ENCODE measurements at regions of chr3 and their contacts with region 1.

Region 1: GRCh38 chr3:194769020-194769643 is 83.4 kb downstream of the FAM43A start:
- DNase-seq: peak; percentile 86
- H3K4me3 Mint-ChIP-seq: peak overlapping the region; percentile 76
- H3K27ac Mint-ChIP-seq: peak overlapping the region; percentile 67
- H3K4me1 Mint-ChIP-seq: peaks cover 21% of the 10 kb centered on the region
- H3K27me3 Mint-ChIP-seq: peaks cover 21% of the 10 kb centered on the region

Region 2: DNA sequence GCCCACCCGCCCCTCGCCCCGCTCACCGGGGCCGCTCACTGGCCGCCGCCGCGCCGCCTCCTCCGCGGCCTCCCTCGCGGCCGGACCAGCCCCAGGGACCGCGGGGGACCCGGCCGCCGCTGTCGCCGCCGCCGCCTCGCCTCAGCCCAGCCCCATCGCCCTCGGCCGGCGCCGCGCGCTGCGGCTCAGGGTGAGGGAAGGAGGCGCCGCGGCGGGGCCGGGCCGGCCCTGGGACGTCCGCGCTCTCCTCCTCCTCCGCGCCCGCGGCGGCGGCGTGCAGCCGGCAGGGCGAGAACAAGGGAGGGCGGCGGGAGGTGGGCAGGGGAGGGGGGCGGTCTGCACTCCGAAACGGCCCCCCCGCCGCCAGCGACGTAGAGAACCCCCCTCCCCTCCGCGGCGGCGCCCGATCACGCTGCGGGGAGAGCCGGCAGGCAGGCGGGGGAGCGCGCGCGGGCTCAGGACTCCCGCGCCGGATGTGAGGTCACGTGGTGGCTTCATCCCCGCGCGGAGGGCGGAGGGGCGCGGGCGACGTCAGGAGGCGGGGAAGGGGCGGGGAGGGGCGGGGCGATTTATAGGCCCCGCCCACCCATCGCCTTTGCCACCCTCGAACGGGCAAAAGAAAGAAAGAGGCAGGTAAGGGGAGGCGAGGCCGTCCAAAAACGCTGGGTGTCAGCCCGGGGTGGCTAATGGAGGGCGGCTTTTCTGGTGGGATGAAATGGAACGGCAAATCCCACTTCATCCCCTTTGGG is 282.4 kb before region 1 on chr3 and contains the start of gene ATP13A3:
- intact Hi-C with region 1: loop called (anchors 5 kb)
- DNase-seq: peak; percentile 87
- H3K4me3 Mint-ChIP-seq: peak within 1 kb of the TSS; percentile 96
- H3K27ac Mint-ChIP-seq: peak within 1 kb of the TSS; percentile 95
- H3K4me1 Mint-ChIP-seq: peaks cover 55% of the 10 kb centered on the region
- H3K27me3 Mint-ChIP-seq: peaks cover 1% of the 10 kb centered on the region
- total RNA-seq, gene ATP13A3: 198 and 206 TPM in 2 replicates

Region 3: GRCh38 chr3:194583604-194584318 is 185.4 kb before region 1 on chr3:
- intact Hi-C with region 1: loop called (anchors 5 kb)
- DNase-seq: peak; percentile 95
- H3K4me3 Mint-ChIP-seq: peak overlapping the region; percentile 98
- H3K27ac Mint-ChIP-seq: peak overlapping the region; percentile 96
- H3K4me1 Mint-ChIP-seq: peaks cover 34% of the 10 kb centered on the region
- H3K27me3 Mint-ChIP-seq: peaks cover 7% of the 10 kb centered on the region

Region 4: DNA sequence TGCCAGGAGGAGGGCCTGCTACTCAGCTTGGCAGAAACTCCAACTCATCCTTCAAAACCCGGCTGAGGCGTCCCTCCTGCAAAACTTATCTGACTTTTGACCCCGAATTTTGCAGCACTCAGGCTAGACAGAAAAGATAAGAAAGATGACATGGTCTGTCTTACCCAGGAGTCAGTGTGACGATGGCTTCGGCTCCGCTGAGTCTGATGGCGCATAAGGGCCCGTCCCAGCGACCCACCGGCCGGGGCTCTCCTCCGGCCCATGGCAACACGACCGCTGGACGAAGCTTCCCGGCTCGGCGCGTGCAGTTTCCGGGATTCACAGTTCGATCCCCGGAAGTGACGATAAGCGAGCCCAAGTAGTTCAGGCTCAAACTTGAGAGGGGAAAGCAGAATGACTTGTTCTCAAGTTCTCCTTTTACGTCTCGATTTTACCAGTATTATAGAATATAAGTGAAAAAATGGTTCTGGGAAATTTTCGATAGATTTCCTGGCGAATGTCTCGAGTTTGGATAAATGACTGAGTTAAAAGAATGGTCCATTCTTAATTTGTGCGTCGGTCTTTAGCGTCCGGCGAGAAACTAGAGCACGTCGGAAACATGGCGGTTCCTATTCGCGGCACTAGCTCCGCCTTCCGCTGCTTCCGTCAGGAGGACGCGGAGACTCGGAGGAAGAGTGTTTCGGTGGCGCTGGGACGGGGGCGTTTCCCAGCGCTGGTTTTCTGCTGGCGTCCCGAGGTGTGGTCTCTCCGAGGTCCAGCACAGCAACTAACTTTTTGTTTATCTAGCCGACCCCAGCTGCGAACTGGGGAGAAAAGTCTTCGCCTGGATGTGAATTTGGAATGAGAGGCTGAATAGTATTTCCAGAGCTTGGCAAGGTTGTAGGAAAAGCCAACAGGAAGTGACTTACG is 97.0 kb before region 1 on chr3 and contains the start of gene LSG1:
- intact Hi-C with region 1: loop called (anchors 1 kb)
- DNase-seq: peak; percentile 84
- H3K4me3 Mint-ChIP-seq: peak within 1 kb of the TSS; percentile 99
- H3K27ac Mint-ChIP-seq: peak within 1 kb of the TSS; percentile 97
- H3K4me1 Mint-ChIP-seq: peaks cover 68% of the 10 kb centered on the region
- H3K27me3 Mint-ChIP-seq: peaks cover 3% of the 10 kb centered on the region
- total RNA-seq, gene LSG1: 65.1 and 66.3 TPM in 2 replicates

Region 5: GRCh38 chr3:195259475-195260279 is 490.5 kb after region 1 on chr3:
- intact Hi-C with region 1: loop called (anchors 1 kb)
- DNase-seq: peak; percentile 76
- H3K4me3 Mint-ChIP-seq: peak overlapping the region; percentile 15
- H3K27ac Mint-ChIP-seq: no peak overlapping the region
- H3K4me1 Mint-ChIP-seq: peaks cover 24% of the 10 kb centered on the region
- H3K27me3 Mint-ChIP-seq: no peaks in the 10 kb centered on the region

Region 6: GRCh38 chr3:195442573-195443390 is 673.6 kb after region 1 on chr3 and contains the start of gene ACAP2:
- intact Hi-C with region 1: loop called (anchors 1 kb)
- DNase-seq: peak; percentile 99
- H3K4me3 Mint-ChIP-seq: peak within 1 kb of the TSS; percentile 92
- H3K27ac Mint-ChIP-seq: peak within 1 kb of the TSS; percentile 86
- H3K4me1 Mint-ChIP-seq: peaks cover 42% of the 10 kb centered on the region
- H3K27me3 Mint-ChIP-seq: no peaks in the 10 kb centered on the region
- total RNA-seq, gene ACAP2: 38.2 and 46.3 TPM in 2 replicates

Region 7: DNA sequence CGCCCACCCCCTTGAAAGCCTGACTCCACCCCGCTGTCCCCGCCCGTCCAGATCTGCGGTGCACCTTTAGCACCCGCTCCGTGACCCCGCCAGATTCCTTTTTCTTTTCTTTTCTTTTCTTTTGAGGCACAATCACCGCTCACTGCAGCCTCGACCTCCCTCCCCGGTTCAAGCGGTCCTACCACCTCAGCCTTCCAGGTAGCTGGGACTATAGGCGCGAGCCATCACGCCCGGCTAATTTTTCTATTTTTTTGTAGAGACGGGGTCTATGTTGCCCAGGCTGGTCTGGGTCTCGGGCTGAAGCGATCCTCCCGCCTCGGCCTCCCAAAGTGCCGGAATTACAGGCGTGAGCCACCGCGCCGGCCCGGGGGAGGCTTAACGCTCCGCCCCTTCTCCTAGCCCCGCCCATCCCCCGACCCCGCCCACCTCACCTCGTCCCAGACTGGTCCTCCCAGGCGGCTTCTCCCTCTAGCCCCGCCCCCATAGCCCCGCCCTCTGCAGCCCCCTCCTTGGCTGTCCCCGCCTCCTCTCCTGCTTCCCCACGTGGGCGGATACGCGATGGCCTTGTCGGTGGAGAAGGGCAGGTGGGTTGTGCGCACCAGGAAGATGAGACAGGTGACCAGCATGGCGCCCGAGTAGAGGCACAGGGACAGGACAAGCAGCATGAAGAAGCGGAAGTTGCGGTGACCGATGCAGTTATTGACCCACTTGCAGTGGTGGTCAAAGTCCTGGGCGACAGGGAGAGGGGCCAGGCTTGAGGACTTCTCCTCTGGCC is 1438.9 kb after region 1 on chr3:
- intact Hi-C with region 1: loop called (anchors 5 kb)
- DNase-seq: no peak
- H3K4me3 Mint-ChIP-seq: peak overlapping the region; percentile 80
- H3K27ac Mint-ChIP-seq: peak overlapping the region; percentile 69
- H3K4me1 Mint-ChIP-seq: peaks cover 4% of the 10 kb centered on the region
- H3K27me3 Mint-ChIP-seq: peaks cover 14% of the 10 kb centered on the region